WTC11 (cell line): ENCODE measurements at regions of chr1 and their contacts with region 1.

Region 1: GRCh38 chr1:198788561-198789064 is 149.8 kb downstream of the PTPRC start:
- DNase-seq: peak; percentile 65
- ATAC-seq: peak; percentile 100
- H3K4me3 Mint-ChIP-seq: no peak overlapping the region
- H3K27ac Mint-ChIP-seq: no peak overlapping the region
- H3K4me1 Mint-ChIP-seq: peaks cover 21% of the 10 kb centered on the region
- H3K27me3 Mint-ChIP-seq: no peaks in the 10 kb centered on the region
- CTCF ChIP-seq: peak; percentile 31; the same call in 1 of the 2 replicates

Region 2: GRCh38 chr1:198776602-198777029 is 12.0 kb before region 1 on chr1:
- CTCF ChIA-PET with region 1: interaction called, 14 read pairs
- POLR2A ChIA-PET with region 1: no interaction called
- DNase-seq: no peak
- ATAC-seq: no peak; the same call in 1 of the 2 replicates
- H3K4me3 Mint-ChIP-seq: no peak overlapping the region
- H3K27ac Mint-ChIP-seq: no peak overlapping the region
- H3K4me1 Mint-ChIP-seq: peaks cover 13% of the 10 kb centered on the region
- H3K27me3 Mint-ChIP-seq: no peaks in the 10 kb centered on the region
- CTCF ChIP-seq: no peak

Region 3: DNA sequence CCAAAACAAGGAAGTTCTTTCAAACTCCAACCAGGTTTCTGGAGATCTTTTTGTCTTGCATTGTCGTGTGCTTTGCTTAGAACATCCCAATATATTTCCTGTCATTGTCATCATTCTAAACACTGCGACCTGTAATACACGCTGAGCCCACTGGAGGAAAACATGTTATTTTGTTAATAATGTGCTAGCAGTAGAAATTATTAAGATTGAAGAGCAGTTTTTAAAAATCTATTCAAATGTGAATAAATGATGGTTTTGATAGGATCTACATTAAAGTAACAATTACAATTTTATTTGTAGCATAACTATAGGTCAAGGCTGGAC is 118.8 kb after region 1 on chr1:
- CTCF ChIA-PET with region 1: no interaction called
- POLR2A ChIA-PET with region 1: no interaction called
- DNase-seq: no peak
- ATAC-seq: no peak
- H3K4me3 Mint-ChIP-seq: no peak overlapping the region
- H3K27ac Mint-ChIP-seq: no peak overlapping the region
- H3K4me1 Mint-ChIP-seq: peaks cover 17% of the 10 kb centered on the region
- H3K27me3 Mint-ChIP-seq: no peaks in the 10 kb centered on the region
- CTCF ChIP-seq: no peak

Region 4: DNA sequence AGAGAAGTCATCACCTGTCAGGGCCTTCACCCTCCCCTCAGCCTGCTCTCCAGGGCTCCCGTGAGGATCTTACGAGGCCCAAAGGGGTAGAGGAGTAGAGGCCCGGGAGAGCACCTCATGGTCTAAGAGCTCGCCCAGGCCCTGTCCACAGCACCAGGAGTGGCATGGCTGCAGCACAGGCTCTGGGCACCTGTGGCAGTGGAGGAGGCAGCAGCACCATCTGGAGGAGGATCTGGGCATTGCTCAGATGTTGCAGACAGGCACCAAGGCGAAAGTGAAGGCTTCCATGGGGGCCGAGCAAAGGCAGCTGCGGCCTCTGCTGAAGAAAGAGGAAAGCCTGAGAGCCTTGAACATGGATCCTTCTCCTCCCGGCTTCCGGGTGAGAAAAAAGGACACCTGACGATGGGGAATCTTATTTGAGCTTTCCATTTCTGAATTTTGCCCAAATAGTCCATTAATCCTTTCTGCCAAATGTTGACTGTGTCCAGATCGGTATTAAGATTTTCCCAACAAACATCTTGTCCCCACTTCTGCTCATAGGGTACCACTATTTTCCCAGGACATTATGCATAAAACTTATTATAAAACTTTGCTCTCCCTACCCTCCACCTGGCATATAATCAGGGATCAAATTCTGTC is 454.9 kb after region 1 on chr1:
- CTCF ChIA-PET with region 1: interaction called, 10 read pairs
- POLR2A ChIA-PET with region 1: no interaction called
- DNase-seq: peak; percentile 84
- ATAC-seq: peak; percentile 100
- H3K4me3 Mint-ChIP-seq: no peak overlapping the region
- H3K27ac Mint-ChIP-seq: no peak overlapping the region
- H3K4me1 Mint-ChIP-seq: peaks cover 8% of the 10 kb centered on the region
- H3K27me3 Mint-ChIP-seq: no peaks in the 10 kb centered on the region
- CTCF ChIP-seq: peak; percentile 65